ENCODE measurements at regions of chr17 and their contacts with region 1.

Region 1: DNA sequence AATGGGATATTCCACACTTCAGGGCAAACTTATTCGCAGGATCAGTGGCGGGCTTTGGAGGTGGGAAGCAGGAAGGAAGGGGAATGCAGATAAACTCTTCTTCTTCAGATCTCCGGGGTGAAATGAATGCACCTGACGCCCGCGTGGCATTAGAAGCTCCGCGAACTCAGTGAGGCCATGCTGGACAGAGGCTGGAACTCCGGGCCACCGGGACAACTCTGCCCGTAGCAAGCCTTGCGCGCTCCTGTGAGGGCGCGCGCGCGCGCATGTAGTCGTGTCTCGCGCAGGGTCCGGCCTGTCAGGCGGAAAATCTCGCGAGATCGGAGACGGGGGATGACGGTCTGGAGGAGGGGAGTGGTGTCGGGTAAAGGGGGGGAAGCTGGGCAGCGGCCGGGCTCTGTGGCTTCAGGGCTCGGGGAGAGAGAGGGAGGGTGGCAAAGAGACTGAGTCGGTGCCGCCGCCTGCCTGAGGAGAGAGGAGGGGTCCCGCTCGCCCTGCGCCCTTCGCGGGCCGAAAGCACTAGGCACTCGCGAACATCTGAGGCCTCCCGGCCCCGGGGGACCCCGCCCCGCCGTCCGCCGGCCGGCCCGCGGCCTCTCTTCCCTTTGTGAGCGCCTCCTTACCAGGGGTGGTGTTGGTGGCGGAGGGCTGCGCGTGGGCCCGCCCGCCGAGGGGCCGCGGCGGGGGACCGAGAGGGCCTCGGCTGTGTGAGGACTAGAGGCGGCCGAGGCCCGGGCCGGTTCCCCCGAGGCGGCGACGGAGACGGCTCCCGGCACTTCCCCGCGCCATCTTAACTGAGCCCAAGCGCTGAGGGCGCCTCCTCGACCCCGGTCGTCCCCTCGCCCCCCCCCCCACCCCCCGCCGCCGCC is at the start of gene TAOK1:
- DNase-seq: peak; percentile 99
- H3K4me3 Mint-ChIP-seq: peak within 1 kb of the TSS; percentile 94
- H3K27ac Mint-ChIP-seq: peak within 1 kb of the TSS; percentile 88
- H3K4me1 Mint-ChIP-seq: peaks cover 44% of the 10 kb centered on the region
- H3K27me3 Mint-ChIP-seq: no peaks in the 10 kb centered on the region
- total RNA-seq, gene TAOK1: 21.8 to 21.9 TPM

Region 2: DNA sequence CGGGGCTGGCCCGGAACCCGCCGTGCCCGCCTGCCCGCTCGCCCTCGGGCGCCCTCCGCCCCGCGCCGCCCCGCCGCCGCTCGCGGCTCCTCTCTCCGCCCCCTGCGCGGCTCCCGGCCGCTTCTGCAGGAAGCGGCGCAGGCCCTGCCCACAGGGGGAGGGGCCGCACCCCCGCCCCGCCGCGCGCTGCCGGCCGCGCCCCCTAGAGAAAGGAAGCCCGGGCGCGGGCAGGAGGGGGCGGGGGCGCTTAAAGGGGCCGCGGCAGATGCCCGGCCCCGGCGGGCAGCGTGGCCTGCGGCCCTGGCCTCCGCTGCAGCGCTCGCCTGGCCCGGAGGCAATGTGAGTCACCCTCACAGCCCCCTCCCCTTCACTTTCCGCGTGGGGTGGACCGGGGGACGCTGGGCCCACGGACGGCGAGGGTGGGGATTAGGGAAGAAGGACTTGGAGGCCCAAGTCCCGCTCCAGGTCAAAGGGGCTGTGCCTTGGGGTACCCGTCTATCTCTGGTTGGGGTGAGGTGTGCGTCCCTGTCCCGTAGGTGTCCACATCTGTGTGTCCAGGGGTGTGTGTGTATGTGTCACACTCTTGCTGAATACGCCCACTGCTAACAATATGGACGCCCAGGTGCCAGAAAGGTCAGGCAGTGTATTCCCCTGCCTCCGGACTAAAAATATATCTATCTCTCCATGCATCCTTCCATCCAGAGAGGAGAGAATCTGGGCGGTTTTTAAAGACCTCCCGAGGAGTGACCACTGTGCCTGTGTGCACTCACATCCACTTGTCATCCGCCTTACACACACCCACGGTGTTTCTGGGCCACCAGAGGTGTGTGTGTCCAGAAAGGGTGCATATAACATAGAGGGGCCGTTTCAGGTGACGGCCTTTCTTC is 199.6 kb after region 1 on chr17 and contains the start of gene GIT1:
- CTCF ChIA-PET with region 1: no interaction called
- intact Hi-C with region 1: loop called (anchors 1 kb)
- DNase-seq: peak; percentile 84
- H3K4me3 Mint-ChIP-seq: peak within 1 kb of the TSS; percentile 93
- H3K27ac Mint-ChIP-seq: peak within 1 kb of the TSS; percentile 88
- H3K4me1 Mint-ChIP-seq: peaks cover 70% of the 10 kb centered on the region
- H3K27me3 Mint-ChIP-seq: no peaks in the 10 kb centered on the region
- total RNA-seq, gene GIT1: 35.5 to 37.5 TPM